ENCODE measurements at regions of chr16 and their contacts with region 1.

Region 1: GRCh38 chr16:56317998-56318826 is 107.1 kb downstream of the AMFR start:
- DNase-seq: peak; percentile 85 to 95 (median 93)
- ATAC-seq: peak; percentile 95 to 96
- H3K4me3 ChIP-seq: peak overlapping the region; percentile 11
- H3K27ac ChIP-seq: peak overlapping the region; percentile 6
- H3K4me1 ChIP-seq: no peaks in the 10 kb centered on the region
- H3K27me3 ChIP-seq: no peaks in the 10 kb centered on the region

Region 2: GRCh38 chr16:55944377-55944802 is 373.8 kb before region 1 on chr16:
- intact Hi-C with region 1: loop called (anchors 2 to 10 kb)
- DNase-seq: peak; percentile 78 to 89 (median 81)
- ATAC-seq: peak; percentile 92
- H3K4me3 ChIP-seq: no peak overlapping the region
- H3K27ac ChIP-seq: peak overlapping the region; percentile 72
- H3K4me1 ChIP-seq: no peaks in the 10 kb centered on the region
- H3K27me3 ChIP-seq: no peaks in the 10 kb centered on the region

Measured in right cardiac atrium (tissue), 5 donors.